GM18951 (cell line): ENCODE measurements at regions of chr4 and their contacts with region 1.

Region 1: GRCh38 chr4:8819473-8820177 is 52.0 kb downstream of the HMX1 start:
- POLR2A ChIP-seq: no peak

Region 2: GRCh38 chr4:8468746-8469535 is 350.7 kb before region 1 on chr4:
- in situ Hi-C with region 1: no loop called
- POLR2A ChIP-seq: no peak

Region 3: GRCh38 chr4:8780596-8781368 is 38.8 kb before region 1 on chr4:
- in situ Hi-C with region 1: loop called (anchors 5 kb)
- POLR2A ChIP-seq: no peak

Region 4: DNA sequence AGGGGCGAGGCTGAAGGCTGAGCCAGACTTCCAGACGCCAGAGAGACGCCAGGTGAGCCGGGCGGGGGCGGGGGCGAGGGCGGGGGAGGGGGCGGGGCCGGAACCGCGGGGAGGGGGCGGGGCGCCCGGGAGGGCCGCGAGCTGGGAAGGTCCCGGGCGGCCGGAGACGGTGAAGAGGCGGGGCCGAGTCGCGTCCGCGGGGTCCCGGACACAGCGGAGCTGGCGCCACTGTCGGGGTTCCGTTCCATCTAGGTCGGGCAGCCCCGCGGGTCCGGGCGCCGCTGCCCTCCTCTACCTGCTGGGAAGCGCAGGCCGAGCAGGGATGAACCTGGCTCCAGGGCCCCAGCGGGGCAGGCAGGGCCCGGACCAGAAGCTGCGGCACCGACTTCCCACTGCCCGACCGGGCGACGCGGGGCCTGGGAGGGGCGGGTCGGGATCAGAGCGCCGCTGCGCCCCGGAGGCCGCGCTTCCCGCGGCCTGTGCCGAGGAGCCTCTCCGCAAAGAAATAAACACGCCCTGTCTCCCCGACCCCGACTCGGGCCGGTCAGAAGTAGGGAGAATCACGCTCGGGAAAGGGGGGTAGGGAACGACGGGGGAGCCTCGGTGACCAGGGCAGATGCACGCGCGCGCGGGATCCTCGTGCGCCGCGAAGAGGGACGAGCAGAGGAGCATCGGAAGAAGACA is 41.4 kb after region 1 on chr4:
- in situ Hi-C with region 1: no loop called
- POLR2A ChIP-seq: no peak